Heart left ventricle (tissue), 16 donors: ENCODE measurements at regions of chr4 and their contacts with region 1.

Region 1: DNA sequence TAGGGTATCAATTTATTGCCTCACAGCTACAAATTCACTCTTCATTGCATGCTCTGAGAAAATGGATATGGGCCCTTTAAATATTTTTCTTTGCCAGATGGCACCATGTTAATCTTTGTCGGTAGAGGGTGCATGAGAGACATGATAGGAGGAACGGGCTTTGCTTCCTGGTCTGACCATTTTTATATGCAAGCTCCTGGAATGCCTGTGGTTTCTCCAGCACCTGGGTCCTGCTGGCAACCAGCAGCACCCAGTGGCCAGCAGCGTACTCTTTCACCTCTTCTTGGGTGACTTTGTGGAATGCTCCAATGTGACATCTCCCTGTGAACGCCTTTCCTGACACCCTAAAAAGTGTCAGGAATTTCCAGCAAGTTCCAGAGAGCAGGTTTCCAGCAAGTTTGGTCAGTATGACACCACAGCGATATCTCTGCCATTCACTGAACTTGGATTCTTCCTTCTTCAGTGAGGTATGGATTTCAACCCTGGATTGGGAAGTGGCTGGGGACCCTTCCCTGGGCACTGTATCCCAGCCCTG is 140.3 kb upstream of the PGRMC2 start:
- DNase-seq: peak in 4 of 5 donors; percentile 22 to 41 (median 35)
- ATAC-seq: peak; percentile 49 to 91 (median 90)
- H3K4me3 ChIP-seq: peak overlapping the region in 4 of 12 donors; percentile 23 to 41 (median 29)
- H3K27ac ChIP-seq: peak overlapping the region in 6 of 12 donors; percentile 5 to 53 (median 32)
- H3K4me1 ChIP-seq: peaks cover 0 to 18% (median 10%) of the 10 kb centered on the region in 12 donors
- H3K27me3 ChIP-seq: no peaks in the 10 kb centered on the region
- CTCF ChIP-seq: peak in 9 of 12 donors; percentile 20 to 56 (median 47)
- POLR2A ChIP-seq: no peak

Region 2: DNA sequence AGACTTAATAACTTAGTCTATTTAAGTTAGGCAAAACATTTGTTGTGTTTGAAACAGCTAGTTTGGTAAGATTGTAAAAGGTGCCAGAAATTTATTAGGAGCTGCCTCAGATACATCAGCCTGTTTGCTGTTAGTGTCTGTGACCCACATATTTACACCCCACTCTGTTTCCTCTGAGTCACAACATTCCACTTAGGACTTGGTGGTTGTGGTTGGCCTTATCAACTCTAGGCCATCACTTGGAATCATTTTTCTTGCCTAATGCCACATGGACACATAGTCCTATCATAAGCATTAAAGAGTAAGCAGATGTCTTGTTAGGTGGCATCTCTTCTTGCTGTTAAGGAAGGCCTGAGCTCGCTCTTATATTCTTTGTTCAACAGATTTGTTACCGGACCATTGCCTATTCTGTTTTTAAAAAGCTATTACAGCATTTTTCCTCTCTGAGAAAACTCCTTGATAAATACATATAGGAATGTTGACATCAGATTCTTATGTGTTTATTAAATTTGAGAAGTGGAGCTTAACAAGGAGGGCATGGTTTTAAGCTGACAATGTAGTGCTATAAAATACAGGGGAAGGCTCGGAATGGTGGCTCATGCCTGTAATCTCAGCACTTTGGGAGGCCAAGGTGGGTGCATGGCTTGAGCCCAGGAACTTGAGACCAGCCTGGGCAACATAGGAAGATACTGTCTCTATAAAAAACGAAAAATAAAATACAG is 89.1 kb before region 1 on chr4:
- intact Hi-C with region 1: loop called in 1 of 10 experiments (anchors 10 kb)
- DNase-seq: no peak
- ATAC-seq: peak in 1 of 4 donors; percentile 26
- H3K4me3 ChIP-seq: no peak overlapping the region
- H3K27ac ChIP-seq: no peak overlapping the region
- H3K4me1 ChIP-seq: peaks cover 0 to 11% (median 0%) of the 10 kb centered on the region in 12 donors
- H3K27me3 ChIP-seq: no peaks in the 10 kb centered on the region
- CTCF ChIP-seq: no peak
- POLR2A ChIP-seq: no peak

Region 3: GRCh38 chr4:128386761-128387599 is 40.9 kb before region 1 on chr4:
- intact Hi-C with region 1: loop called in 2 of 10 experiments (anchors 2 to 5 kb)
- DNase-seq: peak; percentile 83 to 94 (median 89)
- ATAC-seq: peak; percentile 93 to 97 (median 96)
- H3K4me3 ChIP-seq: peak overlapping the region in 5 of 12 donors; percentile 3 to 29 (median 15)
- H3K27ac ChIP-seq: peak overlapping the region; percentile 66 to 92 (median 82)
- H3K4me1 ChIP-seq: peaks cover 0 to 45% (median 26%) of the 10 kb centered on the region in 12 donors
- H3K27me3 ChIP-seq: no peaks in the 10 kb centered on the region
- CTCF ChIP-seq: no peak
- POLR2A ChIP-seq: no peak

Region 4: DNA sequence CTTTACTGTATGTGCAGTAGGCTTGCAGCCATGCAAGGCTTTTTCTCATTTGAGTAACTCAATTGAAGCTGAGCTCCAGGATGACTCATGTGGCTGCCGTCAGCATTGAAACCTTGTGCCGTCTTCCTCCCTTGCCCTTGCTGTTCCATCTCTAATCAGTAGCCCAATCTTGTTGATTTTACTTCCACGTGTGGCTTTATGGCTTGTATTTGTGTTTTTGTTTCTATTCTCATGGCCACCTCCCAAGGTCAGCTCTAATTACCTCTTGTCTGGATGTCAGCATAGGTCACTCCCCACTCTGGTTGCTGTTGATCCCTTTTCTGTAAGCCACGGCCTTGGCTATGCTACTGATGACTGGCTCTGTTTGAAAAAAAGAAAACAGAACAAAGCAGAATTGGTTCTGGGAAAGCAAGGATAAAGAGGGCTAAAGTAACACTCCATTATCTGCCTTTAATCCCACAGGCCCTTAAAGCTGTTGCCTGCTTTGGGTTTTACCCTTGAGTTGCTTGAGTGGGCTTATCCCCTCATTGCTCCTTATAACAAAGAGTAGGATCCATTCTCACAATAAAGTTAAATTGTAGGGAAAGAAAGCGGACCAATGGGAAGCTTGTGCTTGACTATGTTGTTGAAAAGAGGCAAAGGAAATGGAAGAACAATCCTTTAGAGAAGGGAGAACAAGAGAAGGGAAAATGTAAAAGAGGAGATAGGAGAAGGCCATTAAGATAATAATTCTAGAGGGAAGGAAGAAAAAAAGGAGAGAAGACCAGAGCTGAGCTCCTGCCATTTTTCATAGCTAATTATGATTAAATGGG is 33.6 kb after region 1 on chr4:
- intact Hi-C with region 1: no loop called
- DNase-seq: peak in 1 of 5 donors; percentile 26
- ATAC-seq: peak; percentile 47 to 79 (median 63)
- H3K4me3 ChIP-seq: no peak overlapping the region
- H3K27ac ChIP-seq: peak overlapping the region in 2 of 12 donors; percentile 21 to 28
- H3K4me1 ChIP-seq: peaks cover 0 to 4% (median 0%) of the 10 kb centered on the region in 12 donors
- H3K27me3 ChIP-seq: no peaks in the 10 kb centered on the region
- CTCF ChIP-seq: no peak
- POLR2A ChIP-seq: no peak